ENCODE measurements at regions of chr17 and their contacts with region 1.

Region 1: GRCh38 chr17:80826955-80827645 is 164.5 kb upstream of the CHMP6 start:
- DNase-seq: peak; percentile 43 to 81 (median 47)
- H3K4me3 ChIP-seq: no peak overlapping the region
- H3K4me3 Mint-ChIP-seq: no peak overlapping the region
- H3K27ac ChIP-seq: no peak overlapping the region
- H3K27ac Mint-ChIP-seq: peak overlapping the region in 5 of 7 donors; percentile 38 to 84 (median 64)
- H3K4me1 ChIP-seq: peaks cover under 1 to 15% of the 10 kb centered on the region in 2 donors
- H3K4me1 Mint-ChIP-seq: peaks cover 16% of the 10 kb centered on the region
- H3K27me3 ChIP-seq: no peaks in the 10 kb centered on the region
- H3K27me3 Mint-ChIP-seq: peaks cover 0 to 2% (median 0%) of the 10 kb centered on the region in 3 donors
- CTCF ChIP-seq: no peak

Region 2: GRCh38 chr17:80970044-80970761 is 143.1 kb after region 1 on chr17:
- intact Hi-C with region 1: loop called in 1 of 2 experiments (anchors 10 kb)
- DNase-seq: peak in 1 of 3 donors; percentile 8
- H3K4me3 ChIP-seq: no peak overlapping the region
- H3K4me3 Mint-ChIP-seq: peak overlapping the region in 1 of 2 donors; percentile 57
- H3K27ac ChIP-seq: no peak overlapping the region
- H3K27ac Mint-ChIP-seq: no peak overlapping the region
- H3K4me1 ChIP-seq: peaks cover 8 to 15% of the 10 kb centered on the region in 2 donors
- H3K4me1 Mint-ChIP-seq: peaks cover 11% of the 10 kb centered on the region
- H3K27me3 ChIP-seq: peaks cover 0 to 2% of the 10 kb centered on the region in 2 donors
- H3K27me3 Mint-ChIP-seq: peaks cover 0 to 27% (median 25%) of the 10 kb centered on the region in 3 donors
- CTCF ChIP-seq: peak; percentile 37

Region 3: DNA sequence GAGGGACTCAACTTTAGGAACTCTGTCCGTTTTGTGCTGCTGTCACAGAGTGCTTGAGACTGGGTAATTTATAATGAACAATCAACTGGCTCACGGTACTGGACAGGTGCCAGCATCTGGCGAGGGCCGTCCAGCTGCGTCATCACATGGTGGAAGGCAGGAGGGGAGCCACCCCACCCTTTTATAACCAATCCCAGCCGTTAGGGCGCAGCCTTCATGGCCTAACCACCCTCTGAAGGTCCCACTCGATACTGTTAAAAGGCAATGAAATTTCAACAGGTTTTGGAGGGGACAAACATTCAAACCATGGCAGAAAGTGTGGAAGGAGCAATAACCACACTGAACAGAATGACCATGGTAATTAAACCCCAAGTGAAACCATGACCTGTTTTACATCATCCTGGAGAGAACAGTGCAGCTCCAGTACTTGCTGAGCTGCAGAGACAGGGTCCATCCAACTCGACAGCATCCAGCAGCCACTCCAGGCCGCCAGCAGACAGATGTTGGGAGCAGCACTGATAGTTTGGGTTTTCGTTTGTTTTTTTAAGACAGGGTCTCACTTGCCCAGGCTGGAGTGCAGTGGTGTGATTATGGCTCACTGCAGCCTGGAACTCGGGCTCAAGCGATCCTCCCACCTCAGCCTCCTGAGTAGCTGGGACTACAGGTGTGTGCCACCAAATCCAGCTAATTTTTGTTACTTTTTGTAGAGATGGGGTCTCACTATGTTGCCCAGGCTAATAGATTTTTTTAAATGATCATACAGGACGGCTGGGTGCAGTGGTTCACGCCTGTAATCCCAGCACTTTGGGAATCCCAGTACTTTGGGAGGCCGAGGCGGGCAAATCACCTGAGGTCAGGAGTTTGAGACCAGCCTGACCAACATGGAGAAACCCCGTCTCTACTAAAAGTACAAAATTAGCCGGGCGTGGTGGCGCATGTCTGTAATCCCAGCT is 175.6 kb after region 1 on chr17:
- intact Hi-C with region 1: no loop called
- DNase-seq: no peak
- H3K4me3 ChIP-seq: no peak overlapping the region
- H3K4me3 Mint-ChIP-seq: peak overlapping the region in 1 of 2 donors; percentile 79
- H3K27ac ChIP-seq: no peak overlapping the region
- H3K27ac Mint-ChIP-seq: no peak overlapping the region
- H3K4me1 ChIP-seq: peaks cover 23 to 27% of the 10 kb centered on the region in 2 donors
- H3K4me1 Mint-ChIP-seq: peaks cover 35% of the 10 kb centered on the region
- H3K27me3 ChIP-seq: peaks cover 15 to 44% of the 10 kb centered on the region in 2 donors
- H3K27me3 Mint-ChIP-seq: peaks cover 46 to 55% (median 49%) of the 10 kb centered on the region in 3 donors
- CTCF ChIP-seq: no peak

Region 4: GRCh38 chr17:81142301-81143199 is 315.4 kb after region 1 on chr17:
- intact Hi-C with region 1: no loop called
- DNase-seq: peak; percentile 82 to 84 (median 83)
- H3K4me3 ChIP-seq: no peak overlapping the region
- H3K4me3 Mint-ChIP-seq: peak overlapping the region in 1 of 2 donors; percentile 11
- H3K27ac ChIP-seq: no peak overlapping the region
- H3K27ac Mint-ChIP-seq: peak overlapping the region in 1 of 7 donors; percentile 46
- H3K4me1 ChIP-seq: peaks cover 4 to 18% of the 10 kb centered on the region in 2 donors
- H3K4me1 Mint-ChIP-seq: peaks cover 17% of the 10 kb centered on the region
- H3K27me3 ChIP-seq: no peaks in the 10 kb centered on the region
- H3K27me3 Mint-ChIP-seq: peaks cover 1 to 4% (median 2%) of the 10 kb centered on the region in 3 donors
- CTCF ChIP-seq: peak; percentile 76

Measured in CD14-positive monocyte (primary cell).